ENCODE measurements at regions of chr17 and their contacts with region 1.

Region 1: GRCh38 chr17:74296548-74296936 is 22.5 kb downstream of the DNAI2 start:
- DNase-seq: no peak
- ATAC-seq: peak; percentile 61
- H3K4me3 ChIP-seq: no peak overlapping the region
- H3K4me3 Mint-ChIP-seq: no peak overlapping the region
- H3K27ac ChIP-seq: no peak overlapping the region
- H3K27ac Mint-ChIP-seq: peak overlapping the region in 2 of 9 donors; percentile 29 to 51
- H3K4me1 ChIP-seq: peaks cover 0 to 8% of the 10 kb centered on the region in 2 donors
- H3K4me1 Mint-ChIP-seq: peaks cover 0 to 25% (median 4%) of the 10 kb centered on the region in 7 donors
- H3K27me3 ChIP-seq: no peaks in the 10 kb centered on the region
- H3K27me3 Mint-ChIP-seq: peaks cover 0 to 9% (median 0%) of the 10 kb centered on the region in 5 donors

Region 2: DNA sequence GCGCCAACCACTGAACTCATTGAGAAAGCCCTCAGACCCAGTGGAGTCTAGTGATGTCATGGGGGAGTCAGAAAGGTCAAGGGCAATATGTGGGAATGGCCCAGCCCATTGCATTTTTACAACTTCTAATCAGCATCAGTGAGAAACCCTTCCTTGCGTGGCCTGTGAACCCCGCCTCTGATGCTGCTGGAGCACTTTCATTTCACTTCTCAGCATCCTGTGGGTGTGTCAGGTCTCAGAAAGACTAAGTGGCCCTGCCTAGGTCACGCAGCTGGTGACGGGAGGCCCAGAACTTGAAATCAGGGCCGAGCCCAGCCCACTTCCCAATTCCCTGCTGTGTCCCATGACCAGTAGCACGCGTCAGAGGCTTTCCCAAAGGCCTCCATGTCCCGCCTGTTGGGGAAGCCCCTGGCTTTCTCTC is 16.4 kb before region 1 on chr17:
- CTCF ChIA-PET with region 1: interaction called, 8 read pairs
- POLR2A ChIA-PET with region 1: interaction called, 9 read pairs
- intact Hi-C with region 1: loop called in 1 of 2 experiments (anchors 1 kb)
- DNase-seq: peak in 8 of 9 donors; percentile 16 to 59 (median 45)
- ATAC-seq: peak; percentile 87
- H3K4me3 ChIP-seq: no peak overlapping the region
- H3K4me3 Mint-ChIP-seq: peak overlapping the region in 7 of 10 donors; percentile 3 to 65 (median 25)
- H3K27ac ChIP-seq: peak overlapping the region; percentile 67
- H3K27ac Mint-ChIP-seq: peak overlapping the region; percentile 79 to 96 (median 90)
- H3K4me1 ChIP-seq: peaks cover 40 to 54% of the 10 kb centered on the region in 2 donors
- H3K4me1 Mint-ChIP-seq: peaks cover 16 to 67% (median 33%) of the 10 kb centered on the region in 7 donors
- H3K27me3 ChIP-seq: no peaks in the 10 kb centered on the region
- H3K27me3 Mint-ChIP-seq: no peaks in the 10 kb centered on the region

Region 3: GRCh38 chr17:74361230-74362068 is 64.9 kb after region 1 on chr17 and contains the start of gene BTBD17:
- CTCF ChIA-PET with region 1: interaction called, 3 read pairs
- POLR2A ChIA-PET with region 1: no interaction called
- intact Hi-C with region 1: loop called in 1 of 2 experiments (anchors 1 kb)
- DNase-seq: peak in 3 of 9 donors; percentile 18 to 56 (median 23)
- ATAC-seq: peak; percentile 63
- H3K4me3 ChIP-seq: no peak within 1 kb of the TSS
- H3K4me3 Mint-ChIP-seq: no peak within 1 kb of the TSS
- H3K27ac ChIP-seq: no peak within 1 kb of the TSS
- H3K27ac Mint-ChIP-seq: peak within 1 kb of the TSS in 1 of 9 donors; percentile 78
- H3K4me1 ChIP-seq: no peaks in the 10 kb centered on the region
- H3K4me1 Mint-ChIP-seq: peaks cover 0 to 11% (median 4%) of the 10 kb centered on the region in 7 donors
- H3K27me3 ChIP-seq: peaks cover 0 to under 1% of the 10 kb centered on the region in 2 donors
- H3K27me3 Mint-ChIP-seq: peaks cover 14 to 26% (median 22%) of the 10 kb centered on the region in 5 donors
- total RNA-seq, gene BTBD17: not detected

Measured in naive thymus-derived CD4-positive, alpha-beta T cell (primary cell).